T-cell (primary cell): ENCODE measurements at regions of chrX and their contacts with region 1.

Region 1: DNA sequence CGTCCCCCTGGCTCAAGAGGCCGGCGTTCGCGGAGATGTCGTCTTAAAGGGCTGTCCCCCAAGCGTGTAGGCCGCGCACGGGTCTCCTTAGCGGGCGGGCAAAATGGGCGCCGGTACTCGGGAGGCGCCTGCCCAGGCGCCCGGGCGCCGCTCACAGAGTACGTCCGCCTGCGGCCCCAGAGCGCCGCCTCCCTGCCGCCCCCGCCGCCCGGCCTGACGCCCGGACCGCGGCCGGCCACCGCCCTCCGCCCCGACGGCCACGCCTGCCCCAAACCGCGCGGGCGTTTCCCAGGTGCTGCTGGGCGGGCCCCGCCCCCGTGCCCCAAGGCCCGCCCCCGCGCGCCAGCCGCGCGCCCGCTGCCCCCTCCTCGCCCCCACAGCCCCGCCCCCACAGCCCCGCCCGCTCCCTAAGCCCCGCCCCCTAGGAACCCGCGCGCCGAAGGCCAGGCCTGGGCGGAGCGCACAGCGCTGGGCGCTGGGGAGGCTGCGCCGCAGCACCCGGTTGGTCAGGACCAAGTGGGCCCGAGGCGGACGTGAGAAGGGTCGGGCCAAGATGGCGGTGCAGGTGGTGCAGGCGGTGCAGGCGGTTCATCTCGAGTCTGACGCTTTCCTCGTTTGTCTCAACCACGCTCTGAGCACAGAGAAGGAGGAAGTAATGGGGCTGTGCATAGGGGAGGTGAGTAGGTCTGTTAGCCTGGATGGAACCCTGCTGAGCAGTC is at the starts of genes BRCC3, CMC4 and MTCP1:
- DNase-seq: peak; percentile 37 to 79 (median 59)
- ATAC-seq: peak; percentile 81 to 84 (median 84)
- H3K4me3 ChIP-seq: peak within 1 kb of the TSS; percentile 79
- H3K4me3 Mint-ChIP-seq: peak within 1 kb of the TSS; percentile 81 to 89 (median 87)
- H3K27ac ChIP-seq: peak within 1 kb of the TSS; percentile 78
- H3K27ac Mint-ChIP-seq: peak within 1 kb of the TSS; percentile 87 to 90
- H3K4me1 ChIP-seq: peaks cover 5 to 15% of the 10 kb centered on the region in 2 experiments
- H3K4me1 Mint-ChIP-seq: peaks cover 32 to 64% (median 54%) of the 10 kb centered on the region in 3 donors
- H3K27me3 ChIP-seq: no peaks in the 10 kb centered on the region
- H3K27me3 Mint-ChIP-seq: no peaks in the 10 kb centered on the region
- total RNA-seq, gene BRCC3: 14.2 to 17.7 (median 17.0) TPM
- total RNA-seq, gene CMC4: 3.3 to 12.7 (median 6.3) TPM
- total RNA-seq, gene MTCP1: 11.9 to 24.0 (median 19.8) TPM

Region 2: DNA sequence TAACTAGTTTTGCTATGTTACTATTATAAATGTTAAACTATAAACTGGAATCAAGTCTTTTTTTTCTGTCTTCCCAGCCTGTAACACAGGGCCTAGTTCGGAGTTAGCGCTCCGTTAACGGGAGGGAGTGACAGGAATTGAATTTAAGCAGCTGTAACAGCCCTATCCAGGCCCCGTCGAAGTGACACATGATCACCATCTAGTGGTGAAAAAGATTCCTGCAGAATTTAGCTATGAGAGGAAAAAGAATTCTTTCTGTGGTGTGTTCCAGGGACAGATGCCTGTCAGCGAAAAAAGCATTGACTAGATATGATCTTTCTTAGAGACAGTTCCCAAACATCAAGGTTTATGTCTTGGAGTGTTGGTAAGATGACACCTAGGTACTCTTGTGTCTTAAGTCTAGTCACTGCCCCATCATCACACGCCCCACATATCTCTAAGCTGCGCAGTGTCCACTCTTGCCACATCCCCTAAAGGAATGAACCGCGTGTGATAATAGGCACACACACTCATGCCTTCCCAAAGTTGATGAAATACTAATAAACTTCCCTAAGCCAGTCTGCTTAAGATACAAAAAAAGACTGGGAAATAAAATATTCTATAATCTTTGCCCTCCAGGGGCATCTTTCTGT is 322.3 kb before region 1 on chrX:
- CTCF ChIA-PET with region 1: no interaction called
- POLR2A ChIA-PET with region 1: no interaction called
- DNase-seq: peak in 26 of 35 experiments; percentile 10 to 83 (median 33)
- ATAC-seq: peak; percentile 54 to 71 (median 59)
- H3K4me3 ChIP-seq: peak overlapping the region in 1 of 2 donors; percentile 15
- H3K4me3 Mint-ChIP-seq: peak overlapping the region in 2 of 3 donors; percentile 46 to 56
- H3K27ac ChIP-seq: peak overlapping the region; percentile 29
- H3K27ac Mint-ChIP-seq: peak overlapping the region in 1 of 2 donors; percentile 44
- H3K4me1 ChIP-seq: peaks cover 2 to 27% of the 10 kb centered on the region in 2 experiments
- H3K4me1 Mint-ChIP-seq: peaks cover 21 to 42% (median 34%) of the 10 kb centered on the region in 3 donors
- H3K27me3 ChIP-seq: no peaks in the 10 kb centered on the region
- H3K27me3 Mint-ChIP-seq: peaks cover 0 to 16% of the 10 kb centered on the region in 2 donors

Region 3: GRCh38 chrX:155026726-155027508 is 44.2 kb before region 1 on chrX and contains the start of gene FUNDC2:
- CTCF ChIA-PET with region 1: interaction called in 1 of 2 experiments, 10 read pairs
- POLR2A ChIA-PET with region 1: interaction called in 1 of 2 experiments, 3 read pairs
- DNase-seq: peak; percentile 81 to 97 (median 93)
- ATAC-seq: peak; percentile 91 to 94 (median 93)
- H3K4me3 ChIP-seq: peak within 1 kb of the TSS; percentile 60 to 79
- H3K4me3 Mint-ChIP-seq: peak within 1 kb of the TSS; percentile 80 to 89 (median 84)
- H3K27ac ChIP-seq: peak within 1 kb of the TSS; percentile 94
- H3K27ac Mint-ChIP-seq: peak within 1 kb of the TSS; percentile 90 to 94
- H3K4me1 ChIP-seq: peaks cover 0 to 7% of the 10 kb centered on the region in 2 experiments
- H3K4me1 Mint-ChIP-seq: peaks cover 23 to 28% (median 27%) of the 10 kb centered on the region in 3 donors
- H3K27me3 ChIP-seq: no peaks in the 10 kb centered on the region
- H3K27me3 Mint-ChIP-seq: peaks cover 0 to 14% of the 10 kb centered on the region in 2 donors
- total RNA-seq, gene FUNDC2: 50.2 to 56.2 (median 53.0) TPM